ENCODE measurements at regions of chr10 and their contacts with region 1.

Region 1: DNA sequence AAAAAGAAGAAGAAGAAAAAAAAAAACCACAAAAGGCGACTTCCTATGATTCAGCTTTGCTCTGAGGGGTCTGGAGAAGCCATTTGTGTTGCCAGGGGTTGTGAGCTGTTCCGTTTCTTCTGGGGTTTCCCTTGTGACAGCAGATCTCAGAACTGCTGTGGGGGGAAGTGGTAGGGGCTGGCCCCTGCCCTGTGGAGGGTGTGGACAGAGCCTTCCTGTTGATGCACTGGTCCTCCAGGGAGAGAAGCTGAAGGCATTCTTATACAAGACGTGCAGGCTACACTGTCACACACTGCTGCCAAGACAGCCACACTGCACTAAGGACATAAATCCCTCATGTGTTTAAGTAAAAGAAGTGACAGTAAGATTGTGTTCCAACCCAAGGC is 17.3 kb upstream of the CSGALNACT2 start:
- DNase-seq: peak; percentile 82
- H3K4me3 Mint-ChIP-seq: peak overlapping the region; percentile 54
- H3K27ac Mint-ChIP-seq: peak overlapping the region; percentile 90
- H3K4me1 Mint-ChIP-seq: peaks cover 65% of the 10 kb centered on the region
- H3K27me3 Mint-ChIP-seq: no peaks in the 10 kb centered on the region

Region 2: GRCh38 chr10:42769653-42770052 is 351.3 kb before region 1 on chr10:
- intact Hi-C with region 1: no loop called
- DNase-seq: no peak
- H3K4me3 Mint-ChIP-seq: no peak overlapping the region
- H3K27ac Mint-ChIP-seq: no peak overlapping the region
- H3K4me1 Mint-ChIP-seq: no peaks in the 10 kb centered on the region
- H3K27me3 Mint-ChIP-seq: no peaks in the 10 kb centered on the region

Region 3: DNA sequence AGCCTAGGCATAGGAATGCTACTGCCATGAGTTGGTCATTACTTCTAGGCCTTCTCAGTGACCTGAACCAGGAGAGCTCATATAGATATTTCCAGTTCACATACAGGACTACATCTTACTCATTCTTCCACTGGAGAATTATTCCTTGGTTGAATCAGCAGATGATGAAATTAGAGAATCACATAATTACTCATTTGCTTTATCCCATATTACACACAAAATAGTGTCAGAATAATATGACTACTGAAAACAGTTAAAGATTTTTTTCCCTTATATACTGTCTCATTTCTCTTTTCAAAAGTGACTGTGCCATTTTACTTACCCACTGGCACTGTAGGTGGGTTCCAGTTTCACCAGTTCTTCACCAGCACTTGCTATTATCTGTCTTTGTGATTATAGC is 319.8 kb before region 1 on chr10:
- intact Hi-C with region 1: loop called (anchors 1 kb)
- DNase-seq: no peak
- H3K4me3 Mint-ChIP-seq: no peak overlapping the region
- H3K27ac Mint-ChIP-seq: peak overlapping the region; percentile 58
- H3K4me1 Mint-ChIP-seq: peaks cover 12% of the 10 kb centered on the region
- H3K27me3 Mint-ChIP-seq: no peaks in the 10 kb centered on the region

Region 4: GRCh38 chr10:43292755-43293676 is 172.1 kb after region 1 on chr10:
- intact Hi-C with region 1: loop called (anchors 5 kb)
- DNase-seq: no peak
- H3K4me3 Mint-ChIP-seq: peak overlapping the region; percentile 9
- H3K27ac Mint-ChIP-seq: peak overlapping the region; percentile 73
- H3K4me1 Mint-ChIP-seq: peaks cover 86% of the 10 kb centered on the region
- H3K27me3 Mint-ChIP-seq: peaks cover 9% of the 10 kb centered on the region

Region 5: GRCh38 chr10:44143556-44143955 is 1022.6 kb after region 1 on chr10:
- intact Hi-C with region 1: no loop called
- DNase-seq: no peak
- H3K4me3 Mint-ChIP-seq: no peak overlapping the region
- H3K27ac Mint-ChIP-seq: no peak overlapping the region
- H3K4me1 Mint-ChIP-seq: no peaks in the 10 kb centered on the region
- H3K27me3 Mint-ChIP-seq: no peaks in the 10 kb centered on the region